B cell (primary cell): ENCODE measurements at regions of chrX and their contacts with region 1.

Region 1: GRCh38 chrX:65528705-65529340 is 5.8 kb downstream of the LAS1L start:
- DNase-seq: peak; percentile 57
- ATAC-seq: peak; percentile 70
- H3K4me3 ChIP-seq: no peak overlapping the region
- H3K4me3 Mint-ChIP-seq: no peak overlapping the region
- H3K27ac ChIP-seq: no peak overlapping the region
- H3K27ac Mint-ChIP-seq: peak overlapping the region; percentile 20
- H3K4me1 ChIP-seq: peaks cover 8 to 10% of the 10 kb centered on the region in 2 donors
- H3K4me1 Mint-ChIP-seq: peaks cover 15% of the 10 kb centered on the region
- H3K27me3 ChIP-seq: no peaks in the 10 kb centered on the region
- H3K27me3 Mint-ChIP-seq: no peaks in the 10 kb centered on the region
- CTCF ChIP-seq: peak; percentile 84

Region 2: GRCh38 chrX:64093761-64094160 is 1435.1 kb before region 1 on chrX:
- CTCF ChIA-PET with region 1: interaction called, 14 read pairs
- POLR2A ChIA-PET with region 1: no interaction called
- intact Hi-C with region 1: loop called (anchors 5 kb)
- DNase-seq: peak; percentile 2
- ATAC-seq: no peak
- H3K4me3 ChIP-seq: no peak overlapping the region
- H3K4me3 Mint-ChIP-seq: no peak overlapping the region
- H3K27ac ChIP-seq: no peak overlapping the region
- H3K27ac Mint-ChIP-seq: no peak overlapping the region
- H3K4me1 ChIP-seq: no peaks in the 10 kb centered on the region
- H3K4me1 Mint-ChIP-seq: no peaks in the 10 kb centered on the region
- H3K27me3 ChIP-seq: no peaks in the 10 kb centered on the region
- H3K27me3 Mint-ChIP-seq: no peaks in the 10 kb centered on the region
- CTCF ChIP-seq: no peak